Left ventricle myocardium inferior (tissue), 1 donor: ENCODE measurements at regions of chr20 and their contacts with region 1.

Region 1: GRCh38 chr20:52083627-52084232 is 107.8 kb downstream of the ZFP64 start:
- DNase-seq: no peak
- H3K4me3 ChIP-seq: no peak overlapping the region
- H3K27ac ChIP-seq: no peak overlapping the region
- H3K4me1 ChIP-seq: no peaks in the 10 kb centered on the region
- H3K27me3 ChIP-seq: no peaks in the 10 kb centered on the region
- CTCF ChIP-seq: peak; percentile 65

Region 2: GRCh38 chr20:51639206-51639832 is 444.4 kb before region 1 on chr20:
- intact Hi-C with region 1: loop called (anchors 10 kb)
- DNase-seq: peak; percentile 63
- H3K4me3 ChIP-seq: no peak overlapping the region
- H3K27ac ChIP-seq: no peak overlapping the region
- H3K4me1 ChIP-seq: peaks cover under 1% of the 10 kb centered on the region
- H3K27me3 ChIP-seq: no peaks in the 10 kb centered on the region
- CTCF ChIP-seq: peak; percentile 90

Region 3: DNA sequence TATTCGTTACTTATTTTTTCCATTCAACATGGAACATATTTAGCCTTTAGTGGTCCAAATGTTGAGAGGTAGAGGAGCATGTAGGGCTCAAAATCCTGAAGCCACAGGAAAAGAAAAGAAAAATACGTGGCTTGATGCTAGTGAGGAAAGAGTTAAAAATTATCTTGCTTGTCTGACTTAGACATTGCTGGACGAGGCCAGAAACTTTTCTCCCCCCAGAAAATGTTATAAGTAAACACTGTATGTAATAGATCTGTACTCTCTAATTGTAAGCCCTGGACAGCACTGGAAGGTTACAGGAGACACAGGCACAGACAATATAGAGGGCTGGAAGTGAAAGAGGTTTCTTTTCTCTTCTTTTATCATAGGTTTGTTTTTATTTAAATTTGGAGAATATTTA is 57.8 kb before region 1 on chr20:
- intact Hi-C with region 1: no loop called
- DNase-seq: no peak
- H3K4me3 ChIP-seq: no peak overlapping the region
- H3K27ac ChIP-seq: no peak overlapping the region
- H3K4me1 ChIP-seq: no peaks in the 10 kb centered on the region
- H3K27me3 ChIP-seq: no peaks in the 10 kb centered on the region
- CTCF ChIP-seq: no peak